B cell (primary cell): ENCODE measurements at regions of chr1 and their contacts with region 1.

Region 1: GRCh38 chr1:39258146-39258924 is 53.8 kb downstream of the MACF1 start:
- DNase-seq: peak; percentile 76
- ATAC-seq: peak; percentile 65
- H3K4me3 ChIP-seq: no peak overlapping the region
- H3K4me3 Mint-ChIP-seq: no peak overlapping the region
- H3K27ac ChIP-seq: peak overlapping the region in 1 of 2 donors; percentile 53
- H3K27ac Mint-ChIP-seq: peak overlapping the region; percentile 59
- H3K4me1 ChIP-seq: peaks cover 12 to 30% of the 10 kb centered on the region in 2 donors
- H3K4me1 Mint-ChIP-seq: peaks cover 30% of the 10 kb centered on the region
- H3K27me3 ChIP-seq: no peaks in the 10 kb centered on the region
- H3K27me3 Mint-ChIP-seq: no peaks in the 10 kb centered on the region
- CTCF ChIP-seq: peak; percentile 92

Region 2: DNA sequence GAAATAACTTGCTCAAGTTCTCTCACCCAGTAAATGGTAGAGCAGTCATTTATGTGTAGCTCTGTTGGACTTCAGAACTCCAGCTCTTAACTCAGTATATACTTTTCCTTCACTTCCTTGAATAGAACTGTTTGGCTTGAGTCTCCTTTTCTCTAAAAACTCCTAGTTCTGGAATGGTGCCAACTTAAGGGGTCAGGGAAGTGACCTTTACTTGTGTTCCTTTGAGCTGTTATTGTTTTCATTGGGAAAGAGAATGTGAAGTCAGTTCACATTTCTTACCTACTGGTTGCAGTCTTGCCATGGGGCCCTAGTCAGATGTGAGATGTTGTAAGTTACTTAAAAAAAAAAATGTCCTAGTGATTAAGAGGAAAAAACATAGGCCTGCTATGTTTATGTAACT is 130.8 kb before region 1 on chr1:
- CTCF ChIA-PET with region 1: interaction called, 12 read pairs
- POLR2A ChIA-PET with region 1: no interaction called
- intact Hi-C with region 1: no loop called
- DNase-seq: no peak
- ATAC-seq: no peak
- H3K4me3 ChIP-seq: no peak overlapping the region
- H3K4me3 Mint-ChIP-seq: no peak overlapping the region
- H3K27ac ChIP-seq: no peak overlapping the region
- H3K27ac Mint-ChIP-seq: no peak overlapping the region
- H3K4me1 ChIP-seq: no peaks in the 10 kb centered on the region
- H3K4me1 Mint-ChIP-seq: no peaks in the 10 kb centered on the region
- H3K27me3 ChIP-seq: no peaks in the 10 kb centered on the region
- H3K27me3 Mint-ChIP-seq: no peaks in the 10 kb centered on the region
- CTCF ChIP-seq: no peak

Region 3: GRCh38 chr1:39196244-39197215 is 61.8 kb before region 1 on chr1:
- CTCF ChIA-PET with region 1: interaction called, 439 read pairs
- POLR2A ChIA-PET with region 1: interaction called, 6 read pairs
- intact Hi-C with region 1: loop called (anchors 1 kb)
- DNase-seq: peak; percentile 61
- ATAC-seq: peak; percentile 53
- H3K4me3 ChIP-seq: peak overlapping the region in 1 of 5 experiments; percentile 55
- H3K4me3 Mint-ChIP-seq: peak overlapping the region; percentile 57
- H3K27ac ChIP-seq: peak overlapping the region; percentile 62 to 78
- H3K27ac Mint-ChIP-seq: peak overlapping the region; percentile 87
- H3K4me1 ChIP-seq: peaks cover 51 to 59% of the 10 kb centered on the region in 2 donors
- H3K4me1 Mint-ChIP-seq: peaks cover 57% of the 10 kb centered on the region
- H3K27me3 ChIP-seq: no peaks in the 10 kb centered on the region
- H3K27me3 Mint-ChIP-seq: no peaks in the 10 kb centered on the region
- CTCF ChIP-seq: no peak

Region 4: DNA sequence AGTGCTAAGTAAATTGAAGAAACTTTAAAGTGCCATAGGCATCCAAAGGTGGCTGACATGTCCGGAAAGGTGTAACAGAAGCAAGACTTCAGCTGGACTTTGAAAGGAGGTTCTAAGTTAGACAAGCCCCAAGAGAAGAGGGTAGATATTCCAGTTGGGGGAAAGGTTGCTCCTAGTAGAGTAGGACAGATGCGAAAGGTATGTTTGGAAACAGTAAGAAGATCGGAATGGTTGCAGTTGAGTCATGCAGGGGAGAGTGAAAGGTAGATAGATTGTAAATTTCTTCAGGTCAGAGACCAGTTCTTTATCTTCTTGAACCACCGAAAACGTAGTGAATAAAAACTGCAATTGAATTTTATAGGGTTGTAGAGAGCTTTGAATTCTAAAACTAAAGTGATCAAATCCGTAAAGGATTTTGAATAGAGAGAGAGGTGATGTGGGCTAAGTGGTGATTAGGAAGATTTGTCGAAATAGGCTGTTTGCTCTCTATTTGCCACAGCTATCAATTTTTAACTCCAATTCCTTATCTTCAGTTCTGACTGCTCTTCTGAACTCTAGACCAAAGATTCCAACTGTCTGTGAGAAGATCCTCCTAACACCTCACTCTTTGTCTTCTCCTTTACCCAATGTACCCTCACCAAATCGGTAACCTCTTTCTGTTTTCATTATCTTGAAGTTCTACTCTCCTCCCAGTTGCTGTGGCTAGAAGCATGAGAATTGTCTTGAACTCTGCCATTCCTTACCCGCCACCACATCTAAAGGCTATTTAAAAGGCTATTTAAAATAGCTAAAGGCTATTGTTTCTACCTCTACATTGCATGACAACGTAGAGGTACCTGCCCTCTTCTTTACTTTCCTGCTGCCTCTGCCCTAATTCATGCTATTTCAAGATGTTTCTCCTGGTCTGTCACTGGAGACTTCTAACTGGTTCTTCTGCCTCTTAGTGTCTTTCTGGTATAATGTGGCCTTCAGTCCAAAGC is 37.2 kb before region 1 on chr1:
- CTCF ChIA-PET with region 1: interaction called, 32 read pairs
- POLR2A ChIA-PET with region 1: no interaction called
- intact Hi-C with region 1: no loop called
- DNase-seq: no peak
- ATAC-seq: no peak
- H3K4me3 ChIP-seq: no peak overlapping the region
- H3K4me3 Mint-ChIP-seq: no peak overlapping the region
- H3K27ac ChIP-seq: no peak overlapping the region
- H3K27ac Mint-ChIP-seq: peak overlapping the region; percentile 50
- H3K4me1 ChIP-seq: peaks cover 40 to 47% of the 10 kb centered on the region in 2 donors
- H3K4me1 Mint-ChIP-seq: peaks cover 60% of the 10 kb centered on the region
- H3K27me3 ChIP-seq: no peaks in the 10 kb centered on the region
- H3K27me3 Mint-ChIP-seq: no peaks in the 10 kb centered on the region
- CTCF ChIP-seq: no peak

Region 5: DNA sequence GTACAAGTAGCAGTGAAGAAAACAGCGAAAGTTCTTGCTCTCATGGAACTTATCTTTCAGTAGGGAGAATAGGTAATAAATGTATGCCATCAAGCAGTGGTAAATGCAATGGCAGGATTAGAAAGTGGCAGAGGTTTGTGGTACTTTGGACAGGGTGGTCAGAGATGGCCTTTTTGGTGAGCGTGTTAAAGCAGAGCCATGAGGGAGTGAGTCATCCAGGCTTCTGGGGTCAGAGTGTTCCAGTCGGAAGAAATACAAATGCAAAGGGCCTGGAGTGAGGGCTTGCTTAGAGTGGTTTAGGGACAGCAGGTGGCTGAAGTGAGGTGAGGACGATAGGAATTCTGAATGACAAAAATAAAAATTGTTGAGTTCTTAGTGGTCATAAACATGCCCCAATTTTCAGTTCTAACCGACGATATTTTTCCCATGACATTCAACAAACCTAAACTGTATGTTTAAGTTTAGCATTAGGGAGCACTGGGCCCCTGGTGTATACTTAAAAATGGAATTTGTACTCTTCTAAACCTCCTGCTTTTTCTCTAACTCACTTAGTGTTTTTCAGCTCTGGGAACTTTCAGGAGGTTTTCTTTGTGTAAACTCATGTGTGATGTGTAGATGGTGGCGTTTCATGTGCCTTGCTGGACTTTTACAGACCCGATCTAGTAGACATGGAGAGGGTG is 24.3 kb after region 1 on chr1:
- CTCF ChIA-PET with region 1: interaction called, 17 read pairs
- POLR2A ChIA-PET with region 1: no interaction called
- intact Hi-C with region 1: no loop called
- DNase-seq: no peak
- ATAC-seq: no peak
- H3K4me3 ChIP-seq: no peak overlapping the region
- H3K4me3 Mint-ChIP-seq: no peak overlapping the region
- H3K27ac ChIP-seq: no peak overlapping the region
- H3K27ac Mint-ChIP-seq: no peak overlapping the region
- H3K4me1 ChIP-seq: peaks cover 3 to 5% of the 10 kb centered on the region in 2 donors
- H3K4me1 Mint-ChIP-seq: peaks cover 15% of the 10 kb centered on the region
- H3K27me3 ChIP-seq: no peaks in the 10 kb centered on the region
- H3K27me3 Mint-ChIP-seq: no peaks in the 10 kb centered on the region
- CTCF ChIP-seq: no peak